Motor neuron (in vitro differentiated cells): ENCODE measurements at regions of chr2 and their contacts with region 1.

Region 1: DNA sequence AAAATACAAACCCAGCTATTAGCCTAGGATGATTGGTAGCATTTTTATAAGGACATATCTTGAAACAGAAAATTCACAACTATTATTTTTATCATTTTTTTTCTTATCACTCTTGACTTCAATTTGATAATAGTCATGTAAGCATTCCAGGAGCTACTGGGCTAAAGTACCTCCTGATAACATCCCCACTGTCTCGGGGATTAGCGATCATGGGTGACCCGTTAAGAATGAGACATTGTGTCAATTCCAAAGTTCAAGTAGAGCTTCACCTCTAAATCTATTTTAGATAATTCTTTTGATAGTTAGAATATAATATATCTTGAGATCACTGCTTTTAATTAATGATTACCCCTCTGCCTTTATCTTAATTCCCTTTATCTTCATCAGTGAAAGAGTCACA is 1204.5 kb upstream of the CHAC2 start:
- ATAC-seq: no peak
- H3K4me3 ChIP-seq: no peak overlapping the region
- H3K27ac ChIP-seq: no peak overlapping the region
- H3K4me1 ChIP-seq: no peaks in the 10 kb centered on the region

Region 2: DNA sequence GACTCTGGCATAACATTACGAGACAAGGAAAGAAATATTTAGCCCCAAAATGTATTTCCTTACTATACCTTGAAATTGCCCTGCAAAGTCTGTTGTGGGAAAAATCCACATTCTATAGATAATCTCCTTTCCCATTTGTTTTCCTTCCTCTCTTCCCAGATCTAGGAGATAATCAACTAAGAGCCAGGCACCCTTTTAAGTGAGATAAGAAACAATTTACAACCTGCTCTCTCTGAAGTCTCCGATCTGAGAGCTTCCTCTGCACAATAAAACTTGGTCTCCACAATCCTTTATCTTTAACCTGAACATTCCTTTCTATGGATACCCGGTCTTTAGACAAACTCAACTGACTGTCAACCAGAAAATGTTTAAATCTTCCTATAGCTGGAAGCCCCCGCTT is 370.5 kb before region 1 on chr2:
- in situ Hi-C with region 1: no loop called
- ATAC-seq: no peak
- H3K4me3 ChIP-seq: no peak overlapping the region
- H3K27ac ChIP-seq: no peak overlapping the region
- H3K4me1 ChIP-seq: no peaks in the 10 kb centered on the region

Region 3: DNA sequence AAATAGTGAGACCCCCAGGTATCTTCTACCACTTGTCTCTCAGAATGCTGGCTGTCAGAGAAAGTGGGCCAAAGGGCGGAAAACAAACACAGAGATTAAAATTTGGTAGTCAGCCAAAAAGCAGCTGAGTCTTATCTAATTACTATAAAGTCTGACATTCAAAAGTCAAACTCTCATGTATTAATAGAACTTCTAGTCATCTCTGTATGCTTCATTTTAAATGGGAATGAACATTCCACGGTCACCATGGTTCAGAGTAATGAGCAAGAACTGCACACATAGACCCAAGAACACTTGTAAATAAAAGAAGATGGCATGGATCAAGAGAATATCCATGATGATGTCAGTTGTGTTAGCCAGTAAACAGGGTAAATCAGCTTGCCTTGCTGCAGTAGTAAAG is 62.6 kb before region 1 on chr2:
- in situ Hi-C with region 1: loop called in 1 of 9 experiments (anchors 10 kb)
- ATAC-seq: no peak
- H3K4me3 ChIP-seq: no peak overlapping the region
- H3K27ac ChIP-seq: no peak overlapping the region
- H3K4me1 ChIP-seq: no peaks in the 10 kb centered on the region

Region 4: GRCh38 chr2:53188851-53189510 is 625.8 kb after region 1 on chr2:
- in situ Hi-C with region 1: no loop called
- ATAC-seq: peak in 4 of 8 experiments; percentile 18 to 59 (median 34)
- H3K4me3 ChIP-seq: no peak overlapping the region
- H3K27ac ChIP-seq: no peak overlapping the region
- H3K4me1 ChIP-seq: peaks cover 0 to 5% of the 10 kb centered on the region in 2 donors